ENCODE measurements at regions of chr1 and their contacts with region 1.

Region 1: GRCh38 chr1:32933742-32934322 is 30.8 kb downstream of the RNF19B start:
- DNase-seq: no peak
- H3K4me3 Mint-ChIP-seq: no peak overlapping the region
- H3K27ac Mint-ChIP-seq: no peak overlapping the region
- H3K4me1 Mint-ChIP-seq: peaks cover 11% of the 10 kb centered on the region
- H3K27me3 Mint-ChIP-seq: no peaks in the 10 kb centered on the region

Region 2: DNA sequence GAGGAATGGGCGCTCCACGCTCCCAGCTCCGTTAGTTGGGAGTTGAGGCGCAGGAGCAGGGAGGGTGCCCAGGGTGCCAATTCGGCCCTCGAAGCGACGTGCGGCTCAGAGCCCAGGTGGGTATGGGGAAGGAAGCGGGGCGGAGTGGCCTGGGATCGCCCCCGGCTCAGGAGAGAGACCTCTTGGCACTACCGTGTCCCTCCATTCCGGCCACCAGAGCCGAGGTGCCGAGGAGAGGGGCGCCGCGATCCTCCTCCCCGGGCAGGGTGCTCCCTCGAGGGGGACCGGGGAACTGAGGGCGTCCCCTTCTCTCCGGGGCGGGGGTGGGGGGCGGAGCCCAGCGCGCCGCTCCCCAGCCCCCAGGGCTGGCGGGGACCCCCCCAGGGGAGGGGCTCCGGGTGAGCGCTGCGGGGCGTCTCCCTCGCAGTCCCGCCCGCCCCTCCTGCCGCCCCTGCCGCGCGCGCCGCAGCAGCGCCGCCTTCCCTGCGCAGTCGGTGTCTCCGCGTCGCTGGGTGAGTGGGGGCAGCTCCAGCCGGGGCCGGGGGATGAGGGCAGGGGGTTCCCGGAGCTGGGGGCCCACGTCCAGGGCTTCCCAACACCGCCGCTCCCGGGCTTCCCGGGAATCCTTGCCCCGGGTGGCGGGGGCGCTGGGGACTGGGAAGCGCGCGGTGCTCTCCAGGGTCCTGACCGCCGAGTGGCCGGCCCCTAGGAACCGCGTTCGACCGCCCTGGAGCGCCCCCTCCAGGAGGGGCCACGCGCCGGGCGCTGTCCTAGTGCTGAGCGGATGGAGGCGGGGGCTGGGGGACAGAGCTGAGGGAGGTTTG is 47.6 kb before region 1 on chr1 and contains the start of gene HPCA:
- CTCF ChIA-PET with region 1: no interaction called
- intact Hi-C with region 1: no loop called
- DNase-seq: peak; percentile 57
- H3K4me3 Mint-ChIP-seq: no peak within 1 kb of the TSS
- H3K27ac Mint-ChIP-seq: no peak within 1 kb of the TSS
- H3K4me1 Mint-ChIP-seq: peaks cover 2% of the 10 kb centered on the region
- H3K27me3 Mint-ChIP-seq: peaks cover 54% of the 10 kb centered on the region
- total RNA-seq, gene HPCA: not detected

Region 3: GRCh38 chr1:33007190-33008050 is 73.6 kb after region 1 on chr1:
- CTCF ChIA-PET with region 1: interaction called, 12 read pairs
- intact Hi-C with region 1: loop called (anchors 1 kb)
- DNase-seq: peak; percentile 28
- H3K4me3 Mint-ChIP-seq: no peak overlapping the region
- H3K27ac Mint-ChIP-seq: peak overlapping the region; percentile 47
- H3K4me1 Mint-ChIP-seq: peaks cover 23% of the 10 kb centered on the region
- H3K27me3 Mint-ChIP-seq: no peaks in the 10 kb centered on the region

Region 4: GRCh38 chr1:33055210-33056008 is 121.6 kb after region 1 on chr1:
- CTCF ChIA-PET with region 1: interaction called, 84 read pairs
- intact Hi-C with region 1: loop called (anchors 1 kb)
- DNase-seq: peak; percentile 36
- H3K4me3 Mint-ChIP-seq: no peak overlapping the region
- H3K27ac Mint-ChIP-seq: no peak overlapping the region
- H3K4me1 Mint-ChIP-seq: peaks cover 4% of the 10 kb centered on the region
- H3K27me3 Mint-ChIP-seq: no peaks in the 10 kb centered on the region

Region 5: GRCh38 chr1:33086384-33086850 is 152.6 kb after region 1 on chr1:
- CTCF ChIA-PET with region 1: interaction called, 42 read pairs
- intact Hi-C with region 1: loop called (anchors 1 kb)
- DNase-seq: peak; percentile 66
- H3K4me3 Mint-ChIP-seq: no peak overlapping the region
- H3K27ac Mint-ChIP-seq: no peak overlapping the region
- H3K4me1 Mint-ChIP-seq: peaks cover 25% of the 10 kb centered on the region
- H3K27me3 Mint-ChIP-seq: no peaks in the 10 kb centered on the region

Region 6: DNA sequence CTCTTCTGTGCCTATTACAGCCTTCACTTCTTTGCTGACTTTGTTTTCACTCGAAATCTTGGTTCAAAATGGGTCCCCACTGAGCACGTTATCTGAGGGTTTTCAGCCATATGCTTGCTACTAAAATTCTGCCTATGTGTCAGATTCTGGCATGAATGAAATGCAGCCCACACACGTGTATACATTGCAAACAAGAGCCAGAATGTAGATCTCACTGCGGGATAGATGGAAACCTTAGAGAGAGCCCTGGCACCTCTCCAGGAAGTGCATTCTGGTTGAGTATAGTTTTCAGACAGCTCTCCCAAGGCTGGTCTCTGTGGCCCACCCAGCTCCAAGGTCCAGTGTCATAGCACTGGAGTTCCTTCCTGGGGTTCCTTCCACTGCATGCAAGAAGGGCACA is 1586.3 kb after region 1 on chr1:
- CTCF ChIA-PET with region 1: no interaction called
- intact Hi-C with region 1: no loop called
- DNase-seq: no peak
- H3K4me3 Mint-ChIP-seq: no peak overlapping the region
- H3K27ac Mint-ChIP-seq: no peak overlapping the region
- H3K4me1 Mint-ChIP-seq: no peaks in the 10 kb centered on the region
- H3K27me3 Mint-ChIP-seq: peaks cover 2% of the 10 kb centered on the region

Measured in activated naive CD4-positive, alpha-beta T cell treated with anti-CD3 and anti-CD28 coated beads for 36 hours (primary cell).